Mammary epithelial cell (primary cell): ENCODE measurements at regions of chr19 and their contacts with region 1.

Region 1: GRCh38 chr19:2827840-2828489 is 8.3 kb downstream of the ZNF554 start:
- DNase-seq: no peak
- H3K4me3 ChIP-seq: no peak overlapping the region
- H3K27ac ChIP-seq: no peak overlapping the region
- H3K4me1 ChIP-seq: no peaks in the 10 kb centered on the region
- H3K27me3 ChIP-seq: no peaks in the 10 kb centered on the region
- CTCF ChIP-seq: no peak

Region 2: DNA sequence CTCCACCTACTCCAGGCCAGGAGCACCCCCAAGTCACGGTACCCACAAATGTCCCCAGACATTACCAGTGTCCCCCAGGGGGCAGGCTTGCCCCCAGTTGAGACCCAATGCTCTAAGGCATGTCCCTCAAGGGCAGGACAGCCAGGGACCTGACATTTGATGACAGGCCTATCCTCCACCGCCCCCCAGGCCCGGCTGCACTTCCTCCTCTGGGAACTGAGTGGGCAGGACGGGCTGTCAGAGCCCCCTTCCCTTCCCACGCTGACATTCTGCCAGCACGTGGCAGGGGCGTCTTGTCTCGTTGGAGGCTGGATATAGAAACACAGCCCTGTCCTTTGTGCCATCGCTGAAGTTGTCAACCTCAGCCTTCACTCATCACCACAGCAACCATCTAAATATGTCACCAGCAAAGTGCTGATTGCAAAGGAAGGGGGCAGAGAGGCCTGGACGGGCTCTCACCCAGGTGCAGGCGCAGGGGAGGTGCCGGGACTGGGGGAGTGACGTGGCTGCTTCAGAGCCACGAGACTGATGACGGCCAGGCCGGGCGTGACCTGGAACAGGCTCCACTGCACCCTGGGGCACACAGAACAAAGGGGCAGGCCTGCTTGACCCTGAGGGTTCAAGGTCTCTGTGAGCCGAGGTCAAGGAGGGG is 163.9 kb before region 1 on chr19:
- CTCF ChIA-PET with region 1: no interaction called
- dilution Hi-C with region 1: no loop called
- in situ Hi-C with region 1: no loop called
- intact Hi-C with region 1: no loop called
- DNase-seq: no peak
- H3K4me3 ChIP-seq: no peak overlapping the region
- H3K27ac ChIP-seq: no peak overlapping the region
- H3K4me1 ChIP-seq: no peaks in the 10 kb centered on the region
- H3K27me3 ChIP-seq: no peaks in the 10 kb centered on the region
- CTCF ChIP-seq: no peak

Region 3: GRCh38 chr19:2798733-2799132 is 29.2 kb before region 1 on chr19:
- CTCF ChIA-PET with region 1: no interaction called
- dilution Hi-C with region 1: no loop called
- in situ Hi-C with region 1: no loop called
- intact Hi-C with region 1: no loop called
- DNase-seq: no peak
- H3K4me3 ChIP-seq: no peak overlapping the region
- H3K27ac ChIP-seq: no peak overlapping the region
- H3K4me1 ChIP-seq: no peaks in the 10 kb centered on the region
- H3K27me3 ChIP-seq: no peaks in the 10 kb centered on the region
- CTCF ChIP-seq: no peak

Region 4: DNA sequence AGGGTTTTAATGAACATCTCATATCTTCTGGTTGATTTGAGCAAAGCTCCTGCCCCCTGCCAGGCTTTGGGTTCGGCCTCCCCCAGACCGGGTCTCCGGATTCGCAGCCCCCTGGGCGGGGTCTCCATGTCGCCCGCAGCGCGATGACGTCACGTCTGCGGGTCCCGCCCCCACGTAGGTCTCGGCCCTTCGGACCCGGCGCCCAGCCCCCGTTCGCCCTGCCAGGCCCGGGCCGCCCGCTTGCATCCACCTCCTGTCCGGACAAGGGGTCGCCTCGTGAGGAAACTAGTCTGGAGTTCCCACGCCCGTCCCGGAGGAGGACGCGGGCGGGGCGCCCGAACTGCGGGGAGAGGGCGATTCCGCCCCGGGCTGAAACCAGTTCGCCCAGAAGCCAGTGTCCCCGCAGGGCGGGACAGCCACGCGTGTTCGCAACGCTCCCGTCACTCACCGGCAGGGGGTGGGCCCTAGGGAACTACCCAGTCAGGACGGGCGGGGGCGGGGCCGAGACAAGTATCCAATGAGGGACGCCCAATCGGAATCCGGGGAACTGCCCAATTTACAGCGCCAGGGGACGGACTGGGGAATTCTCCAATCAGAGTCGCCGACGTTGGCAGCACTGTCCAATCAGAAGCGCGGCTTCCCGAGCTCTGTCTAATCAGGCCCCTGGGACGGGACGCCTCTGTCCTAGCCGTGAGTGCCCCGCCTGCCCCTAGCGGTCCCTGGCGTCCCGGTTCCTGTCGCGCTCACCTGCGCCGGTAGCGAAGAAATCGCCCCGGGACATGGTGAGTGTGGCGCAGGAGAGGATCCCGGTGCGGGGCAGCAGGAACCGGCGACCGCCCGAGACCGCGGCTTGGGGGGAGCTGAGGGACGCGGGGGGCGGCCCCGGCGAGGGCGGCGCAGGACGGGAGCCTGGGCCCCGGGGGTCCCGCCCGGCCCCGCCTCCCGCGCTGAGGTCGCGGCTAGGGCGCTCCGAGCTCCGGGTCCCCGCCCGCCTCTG is 13.1 kb after region 1 on chr19 and contains the start of gene ZNF555:
- CTCF ChIA-PET with region 1: no interaction called
- dilution Hi-C with region 1: no loop called
- in situ Hi-C with region 1: no loop called
- intact Hi-C with region 1: no loop called
- DNase-seq: peak; percentile 99
- H3K4me3 ChIP-seq: peak within 1 kb of the TSS; percentile 72 to 89 (median 80)
- H3K27ac ChIP-seq: peak within 1 kb of the TSS; percentile 29
- H3K4me1 ChIP-seq: peaks cover 6% of the 10 kb centered on the region
- H3K27me3 ChIP-seq: no peaks in the 10 kb centered on the region
- CTCF ChIP-seq: peak; percentile 35 to 58
- total RNA-seq, gene ZNF555: 4.6 to 7.2 TPM

Region 5: DNA sequence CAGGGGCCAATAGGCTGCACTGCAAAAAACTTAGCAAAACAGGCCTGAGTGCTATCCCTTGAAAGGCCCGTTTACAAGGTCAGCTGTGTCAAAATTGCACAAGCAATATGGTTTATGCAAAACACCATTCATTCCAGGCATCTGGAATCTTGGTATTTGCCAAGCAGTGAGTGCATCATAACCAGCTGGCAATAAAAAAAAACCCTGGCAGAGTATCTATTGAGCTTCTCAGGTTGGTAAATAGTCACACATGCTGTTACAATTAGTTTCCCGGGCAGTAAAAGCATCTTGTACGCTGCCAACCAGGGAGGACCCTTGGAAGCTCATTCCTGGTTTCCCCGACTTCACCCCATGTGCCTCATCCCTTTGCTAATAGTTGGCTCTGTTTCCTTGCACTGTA is 95.5 kb after region 1 on chr19:
- CTCF ChIA-PET with region 1: no interaction called
- dilution Hi-C with region 1: loop called (anchors 5 kb)
- in situ Hi-C with region 1: no loop called
- intact Hi-C with region 1: no loop called
- DNase-seq: peak; percentile 71
- H3K4me3 ChIP-seq: no peak overlapping the region
- H3K27ac ChIP-seq: peak overlapping the region; percentile 19
- H3K4me1 ChIP-seq: peaks cover 9% of the 10 kb centered on the region
- H3K27me3 ChIP-seq: no peaks in the 10 kb centered on the region
- CTCF ChIP-seq: no peak